BJ (cell line): ENCODE measurements at regions of chr15 and their contacts with region 1.

Region 1: DNA sequence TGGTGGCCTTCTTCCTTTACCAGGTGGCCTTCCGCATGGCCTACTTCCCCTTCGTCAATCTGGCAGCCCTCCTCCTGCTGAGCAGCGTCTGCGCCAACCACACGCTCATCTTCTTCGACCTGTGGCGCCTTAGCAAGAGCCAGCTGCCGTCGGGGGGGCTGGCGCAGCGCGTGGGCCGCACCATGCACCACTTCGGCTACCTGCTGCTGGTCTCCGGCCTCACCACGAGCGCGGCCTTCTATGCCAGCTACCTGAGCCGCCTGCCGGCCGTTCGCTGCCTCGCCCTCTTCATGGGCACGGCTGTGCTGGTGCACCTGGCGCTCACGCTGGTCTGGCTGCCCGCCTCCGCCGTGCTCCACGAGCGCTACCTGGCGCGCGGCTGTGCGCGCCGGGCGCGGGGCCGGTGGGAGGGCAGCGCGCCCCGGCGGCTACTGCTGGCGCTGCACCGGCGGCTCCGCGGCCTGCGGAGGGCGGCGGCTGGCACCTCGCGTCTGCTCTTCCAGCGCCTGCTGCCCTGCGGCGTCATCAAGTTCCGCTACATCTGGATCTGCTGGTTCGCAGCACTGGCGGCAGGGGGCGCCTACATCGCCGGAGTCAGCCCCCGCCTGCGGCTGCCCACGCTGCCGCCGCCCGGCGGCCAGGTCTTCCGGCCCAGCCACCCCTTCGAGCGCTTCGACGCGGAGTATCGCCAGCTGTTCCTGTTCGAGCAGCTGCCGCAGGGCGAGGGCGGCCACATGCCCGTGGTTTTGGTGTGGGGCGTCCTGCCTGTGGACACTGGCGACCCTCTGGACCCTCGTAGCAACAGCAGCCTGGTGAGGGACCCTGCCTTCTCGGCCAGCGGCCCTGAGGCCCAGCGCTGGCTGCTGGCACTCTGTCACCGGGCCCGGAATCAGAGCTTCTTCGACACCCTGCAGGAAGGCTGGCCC is 9.9 kb downstream of the DISP2 start:
- DNase-seq: no peak
- H3K4me3 ChIP-seq: peak overlapping the region; percentile 25
- H3K27me3 ChIP-seq: no peaks in the 10 kb centered on the region
- CTCF ChIP-seq: peak; percentile 59

Region 2: GRCh38 chr15:40357723-40358470 is 10.1 kb before region 1 on chr15 and contains the start of gene DISP2:
- CTCF ChIA-PET with region 1: interaction called, 17 read pairs
- POLR2A ChIA-PET with region 1: no interaction called
- DNase-seq: no peak
- H3K4me3 ChIP-seq: peak within 1 kb of the TSS; percentile 51
- H3K27me3 ChIP-seq: peaks cover 17% of the 10 kb centered on the region
- CTCF ChIP-seq: no peak
- polyA plus RNA-seq, gene DISP2: 0.16 and 0.23 TPM in 2 replicates

Region 3: DNA sequence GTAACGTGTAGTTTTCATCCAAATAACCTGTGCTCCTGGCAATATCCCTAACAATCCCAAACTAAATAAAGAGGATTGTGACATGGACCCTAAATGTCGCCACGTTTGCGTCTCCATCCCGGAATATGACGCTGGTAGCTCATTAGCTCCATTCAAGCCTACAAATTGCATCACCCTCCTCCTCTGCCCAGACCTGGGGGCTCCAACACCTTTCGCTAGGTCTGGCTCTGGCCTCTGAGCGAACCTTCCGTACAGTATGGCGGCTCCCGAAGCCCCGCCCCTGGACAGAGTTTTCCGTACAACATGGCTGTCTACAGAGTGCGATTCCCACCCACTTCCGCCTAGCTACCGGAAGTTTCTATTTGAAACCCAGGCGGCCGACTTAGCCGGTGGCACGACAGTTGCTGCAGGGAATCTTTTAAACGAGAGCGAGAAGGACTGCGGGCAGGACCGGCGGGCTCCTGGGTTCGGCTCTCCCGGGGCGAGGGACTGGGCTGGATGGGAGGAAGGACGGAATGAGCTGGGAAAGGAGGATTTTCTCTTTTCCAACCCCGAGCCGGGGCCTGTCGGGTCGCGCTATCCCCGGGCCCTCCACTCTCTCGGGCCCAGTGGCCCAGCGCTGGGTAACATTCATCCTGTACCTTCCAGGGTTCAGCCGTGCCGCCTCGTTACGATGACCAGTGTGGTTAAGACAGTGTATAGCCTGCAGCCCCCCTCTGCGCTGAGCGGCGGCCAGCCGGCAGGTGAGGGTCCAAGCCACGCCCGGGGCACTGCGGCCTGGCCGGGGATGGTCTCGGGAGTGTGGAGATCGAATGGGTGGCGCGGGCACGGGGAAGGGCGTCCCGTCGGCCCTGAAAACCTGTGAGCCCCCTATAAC is 14.9 kb after region 1 on chr15 and contains the start of gene KNSTRN:
- CTCF ChIA-PET with region 1: interaction called, 33 read pairs
- POLR2A ChIA-PET with region 1: interaction called, 3 read pairs
- DNase-seq: peak; percentile 39
- H3K4me3 ChIP-seq: peak within 1 kb of the TSS; percentile 91
- H3K27me3 ChIP-seq: no peaks in the 10 kb centered on the region
- CTCF ChIP-seq: no peak
- polyA plus RNA-seq, gene KNSTRN: 26.4 and 32.5 TPM in 2 replicates

Region 4: DNA sequence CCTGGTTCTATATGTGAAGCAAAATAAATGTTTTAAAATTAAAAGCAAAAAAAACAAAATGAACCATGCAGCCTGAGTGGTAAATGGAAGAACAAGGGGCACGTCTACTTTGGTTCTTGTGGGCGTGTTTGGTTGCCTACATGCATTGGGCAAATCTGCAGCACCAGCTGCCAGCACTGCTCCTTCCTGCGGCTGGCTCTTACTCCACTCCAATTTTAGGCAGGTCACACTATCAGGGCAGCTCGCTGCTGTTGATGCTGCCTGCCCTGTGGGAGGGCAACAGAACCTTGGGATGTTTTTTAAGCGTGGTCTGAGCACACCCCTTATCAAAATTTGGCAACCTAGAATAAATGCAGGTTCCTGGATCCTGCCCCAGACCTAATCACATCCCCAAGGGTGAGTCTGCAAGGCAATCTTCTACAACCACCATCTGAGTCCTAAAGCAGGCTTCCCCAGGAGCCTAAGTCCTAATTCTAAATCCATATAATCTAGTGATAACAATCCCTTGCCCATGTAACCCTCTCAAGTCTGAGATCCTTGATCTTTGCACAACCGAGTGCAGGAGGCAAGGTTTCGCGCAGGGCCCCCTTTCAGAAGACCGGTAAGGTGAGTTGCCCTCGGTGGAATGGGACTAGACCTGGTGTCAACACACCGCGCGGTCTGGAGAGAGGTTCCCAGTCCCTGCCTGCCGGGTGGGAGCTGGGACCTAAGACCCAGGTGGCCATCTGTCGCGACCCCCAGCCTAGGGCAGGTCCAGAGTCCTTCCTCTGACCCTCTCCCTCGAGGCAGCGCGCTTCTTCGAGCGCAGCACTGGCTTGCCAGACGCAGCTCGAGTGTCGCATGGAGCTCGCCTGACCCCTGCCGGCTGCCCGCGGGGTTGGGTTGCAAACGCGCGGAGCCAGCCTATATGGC is 53.6 kb after region 1 on chr15:
- CTCF ChIA-PET with region 1: interaction called, 36 read pairs
- POLR2A ChIA-PET with region 1: interaction called, 6 read pairs
- DNase-seq: no peak
- H3K4me3 ChIP-seq: no peak overlapping the region
- H3K27me3 ChIP-seq: no peaks in the 10 kb centered on the region
- CTCF ChIP-seq: peak; percentile 99